IMR-90 (cell line): ENCODE measurements at regions of chr5 and their contacts with region 1.

Region 1: GRCh38 chr5:55338810-55339243 is 31.0 kb downstream of the MTREX start:
- DNase-seq: no peak
- ATAC-seq: no peak
- H3K4me3 ChIP-seq: no peak overlapping the region
- H3K27ac ChIP-seq: no peak overlapping the region
- H3K4me1 ChIP-seq: no peaks in the 10 kb centered on the region
- H3K27me3 ChIP-seq: no peaks in the 10 kb centered on the region
- CTCF ChIP-seq: no peak
- POLR2A ChIP-seq: no peak
- RAD21 ChIP-seq: no peak

Region 2: GRCh38 chr5:54073735-54074134 is 1265.1 kb before region 1 on chr5:
- CTCF ChIA-PET with region 1: no interaction called
- POLR2A ChIA-PET with region 1: no interaction called
- dilution Hi-C with region 1: no loop called
- in situ Hi-C with region 1: no loop called
- intact Hi-C with region 1: no loop called
- DNase-seq: no peak
- ATAC-seq: no peak
- H3K4me3 ChIP-seq: no peak overlapping the region
- H3K27ac ChIP-seq: no peak overlapping the region
- H3K4me1 ChIP-seq: no peaks in the 10 kb centered on the region
- H3K27me3 ChIP-seq: no peaks in the 10 kb centered on the region
- CTCF ChIP-seq: no peak
- POLR2A ChIP-seq: no peak
- RAD21 ChIP-seq: no peak

Region 3: DNA sequence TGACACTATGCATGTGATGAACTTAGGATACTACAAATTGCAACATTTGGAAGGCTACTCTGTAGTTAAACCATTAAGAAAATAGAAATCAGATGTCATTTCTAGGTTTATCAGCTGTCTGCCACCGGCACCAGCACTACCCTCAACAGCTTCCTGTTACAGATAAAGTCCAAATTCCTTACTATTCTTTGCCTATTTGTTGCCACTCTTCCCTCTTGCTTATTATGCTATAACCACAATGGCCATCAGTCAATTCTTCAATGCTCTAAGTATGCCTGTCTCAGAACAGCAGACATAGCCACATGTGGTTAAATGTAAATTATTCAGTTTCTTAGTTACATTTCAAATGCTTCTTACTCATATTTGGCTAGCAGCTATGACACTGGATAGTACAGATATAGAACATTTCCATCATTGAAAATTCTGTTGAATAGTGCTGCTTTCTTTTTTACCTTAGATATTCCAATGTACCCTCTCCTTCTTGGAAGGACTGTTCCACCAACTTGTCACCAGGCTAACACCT is 52.4 kb before region 1 on chr5:
- CTCF ChIA-PET with region 1: no interaction called
- POLR2A ChIA-PET with region 1: no interaction called
- dilution Hi-C with region 1: no loop called
- in situ Hi-C with region 1: no loop called
- intact Hi-C with region 1: no loop called
- DNase-seq: no peak
- ATAC-seq: no peak
- H3K4me3 ChIP-seq: no peak overlapping the region
- H3K27ac ChIP-seq: no peak overlapping the region
- H3K4me1 ChIP-seq: no peaks in the 10 kb centered on the region
- H3K27me3 ChIP-seq: no peaks in the 10 kb centered on the region
- CTCF ChIP-seq: no peak
- POLR2A ChIP-seq: no peak
- RAD21 ChIP-seq: no peak

Region 4: GRCh38 chr5:55913466-55914413 is 574.9 kb after region 1 on chr5:
- CTCF ChIA-PET with region 1: no interaction called
- POLR2A ChIA-PET with region 1: no interaction called
- dilution Hi-C with region 1: no loop called
- in situ Hi-C with region 1: loop called (anchors 25 kb)
- intact Hi-C with region 1: loop called (anchors 10 kb)
- DNase-seq: no peak
- ATAC-seq: no peak
- H3K4me3 ChIP-seq: no peak overlapping the region
- H3K27ac ChIP-seq: no peak overlapping the region
- H3K4me1 ChIP-seq: no peaks in the 10 kb centered on the region; the same call in 1 of the 2 replicates
- H3K27me3 ChIP-seq: no peaks in the 10 kb centered on the region
- CTCF ChIP-seq: no peak
- POLR2A ChIP-seq: no peak
- RAD21 ChIP-seq: no peak